Panc1 (cell line): ENCODE measurements at regions of chr10 and their contacts with region 1.

Region 1: DNA sequence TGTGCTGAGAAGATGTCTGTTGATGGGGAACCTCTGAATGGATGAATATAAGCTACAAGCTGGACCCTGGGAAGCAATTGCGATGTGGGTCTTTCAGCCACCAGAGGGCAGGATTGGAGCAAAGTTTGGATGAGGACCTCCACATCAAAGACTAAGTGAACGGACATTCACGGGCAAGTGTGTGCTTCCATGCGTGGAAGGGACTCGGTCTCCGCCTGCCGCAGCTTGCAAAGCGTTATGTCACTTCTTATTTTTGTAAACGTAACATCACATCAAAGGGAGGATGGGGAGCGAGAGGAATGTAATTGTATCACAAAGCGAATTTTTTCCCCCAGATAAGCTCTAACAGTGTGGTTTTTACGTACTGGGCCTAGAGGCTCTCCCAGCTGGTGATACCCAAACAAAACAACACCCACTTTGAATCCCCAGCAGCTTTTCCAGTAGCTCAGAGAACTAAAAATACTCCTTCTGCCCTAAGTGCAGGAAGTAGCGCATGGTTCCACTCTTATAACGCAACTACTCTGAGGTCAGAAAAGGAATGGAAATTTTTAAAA is 65.0 kb downstream of the VWA2 start:
- DNase-seq: peak; percentile 76
- ATAC-seq: peak; percentile 42
- H3K4me3 ChIP-seq: peak overlapping the region; percentile 4 to 11; a peak in 2 of 4 replicates
- H3K27ac ChIP-seq: peak overlapping the region; percentile 74
- H3K4me1 ChIP-seq: peaks cover 40% of the 10 kb centered on the region
- H3K27me3 ChIP-seq: no peaks in the 10 kb centered on the region
- CTCF ChIP-seq: peak; percentile 80

Region 2: DNA sequence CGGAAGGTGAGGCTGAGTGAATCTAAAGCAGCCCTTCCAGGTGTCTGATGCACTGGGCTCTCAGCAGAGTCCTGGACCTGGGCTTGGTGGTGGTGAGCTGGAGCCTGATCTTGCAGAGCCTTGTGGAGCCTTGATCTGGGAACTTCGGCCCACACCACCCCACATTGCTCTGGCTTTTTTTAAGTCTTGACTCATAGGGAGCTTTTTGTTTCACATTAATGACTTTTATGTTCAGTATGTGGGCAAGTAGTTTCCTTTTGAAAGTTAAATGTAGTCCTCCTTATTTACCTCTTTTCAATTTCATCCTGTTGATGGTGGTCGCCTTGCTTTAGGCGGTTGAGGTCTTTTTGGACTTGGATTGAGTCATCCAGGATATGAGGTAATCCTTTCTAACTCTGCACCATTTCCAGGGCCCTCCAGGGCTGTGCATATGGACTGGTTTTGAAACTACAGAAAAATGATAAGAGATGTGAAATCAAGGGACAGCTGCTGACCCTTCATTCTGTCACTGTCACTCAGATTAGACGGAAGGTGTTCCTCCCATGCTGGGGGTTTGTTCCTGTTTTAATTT is 637.3 kb before region 1 on chr10:
- CTCF ChIA-PET with region 1: no interaction called
- POLR2A ChIA-PET with region 1: no interaction called
- in situ Hi-C with region 1: no loop called
- intact Hi-C with region 1: no loop called
- DNase-seq: no peak
- ATAC-seq: no peak
- H3K4me3 ChIP-seq: no peak overlapping the region
- H3K27ac ChIP-seq: no peak overlapping the region
- H3K4me1 ChIP-seq: no peaks in the 10 kb centered on the region
- H3K27me3 ChIP-seq: peaks cover 8% of the 10 kb centered on the region
- CTCF ChIP-seq: no peak

Region 3: DNA sequence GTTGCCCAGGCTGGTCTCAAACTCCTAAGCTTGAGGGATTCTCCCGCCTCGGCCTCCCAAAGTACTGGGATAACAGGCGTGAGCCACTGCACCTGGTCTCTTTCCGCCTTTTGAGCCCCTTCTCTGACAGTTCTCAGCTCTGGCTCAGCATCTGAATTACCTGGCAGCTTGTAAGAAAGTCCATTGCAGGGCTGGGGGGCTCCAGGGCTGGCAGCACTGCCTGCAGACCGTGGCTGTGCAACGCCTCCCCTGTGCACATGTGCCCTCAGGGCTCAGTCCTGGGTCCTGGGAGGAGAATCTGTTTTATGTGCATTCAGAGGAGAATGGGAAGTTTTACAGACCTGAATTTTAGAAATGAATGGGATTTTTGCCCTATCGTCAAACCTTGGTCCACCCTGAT is 27.4 kb before region 1 on chr10:
- CTCF ChIA-PET with region 1: no interaction called
- POLR2A ChIA-PET with region 1: no interaction called
- in situ Hi-C with region 1: no loop called
- intact Hi-C with region 1: no loop called
- DNase-seq: no peak
- ATAC-seq: no peak
- H3K4me3 ChIP-seq: no peak overlapping the region
- H3K27ac ChIP-seq: no peak overlapping the region
- H3K4me1 ChIP-seq: peaks cover 8% of the 10 kb centered on the region
- H3K27me3 ChIP-seq: no peaks in the 10 kb centered on the region
- CTCF ChIP-seq: no peak

Region 4: GRCh38 chr10:114403541-114404161 is 99.6 kb after region 1 on chr10:
- CTCF ChIA-PET with region 1: interaction called, 9 read pairs
- POLR2A ChIA-PET with region 1: interaction called, 3 read pairs
- in situ Hi-C with region 1: no loop called
- intact Hi-C with region 1: loop called (anchors 5 kb)
- DNase-seq: no peak
- ATAC-seq: peak; percentile 66
- H3K4me3 ChIP-seq: peak overlapping the region; percentile 77 to 92
- H3K27ac ChIP-seq: peak overlapping the region; percentile 95
- H3K4me1 ChIP-seq: peaks cover 62% of the 10 kb centered on the region
- H3K27me3 ChIP-seq: no peaks in the 10 kb centered on the region
- CTCF ChIP-seq: peak; percentile 82

Region 5: DNA sequence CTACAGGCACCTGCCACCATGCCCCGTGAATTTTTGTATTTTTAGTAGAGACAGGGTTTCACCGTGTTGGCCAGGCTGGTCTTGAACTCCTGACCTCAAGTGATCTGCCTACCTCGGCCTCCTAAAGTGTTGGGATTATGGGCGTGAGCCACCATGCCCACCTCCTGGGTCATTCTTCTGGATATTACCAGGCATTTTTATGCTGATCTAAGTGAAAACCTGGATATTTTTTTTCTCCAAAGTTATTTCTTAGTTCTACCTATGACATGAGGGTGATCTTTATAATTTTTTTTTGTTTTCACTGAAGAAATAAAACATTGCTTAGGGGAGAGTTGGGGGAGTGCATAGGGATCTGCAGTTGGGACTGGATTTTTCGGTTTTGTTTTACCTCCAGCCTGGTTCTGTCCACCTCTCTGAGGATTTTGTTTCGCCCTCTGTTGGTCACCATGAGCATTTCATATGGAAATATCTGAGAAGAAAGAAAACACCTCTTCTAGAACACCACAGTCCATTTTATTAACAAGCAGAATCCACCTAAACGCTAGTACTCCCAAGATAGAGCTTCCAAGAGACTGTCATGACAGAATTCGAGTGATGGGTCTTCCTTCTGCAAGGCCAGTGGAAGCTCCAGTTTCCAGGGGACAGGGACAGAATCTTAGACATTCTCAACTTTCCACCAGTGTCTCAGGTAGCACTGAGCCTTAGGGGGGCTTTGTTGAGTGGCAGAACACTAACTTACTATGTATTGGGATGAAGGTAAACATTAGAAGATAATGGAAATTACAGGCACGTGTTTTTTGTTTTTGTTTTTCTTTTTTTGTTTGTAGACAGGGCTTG is 133.6 kb after region 1 on chr10:
- CTCF ChIA-PET with region 1: interaction called, 3 read pairs
- POLR2A ChIA-PET with region 1: no interaction called
- in situ Hi-C with region 1: no loop called
- intact Hi-C with region 1: loop called (anchors 1 kb)
- DNase-seq: peak; percentile 15
- ATAC-seq: peak; percentile 74; the same call in 1 of the 2 replicates
- H3K4me3 ChIP-seq: no peak overlapping the region
- H3K27ac ChIP-seq: peak overlapping the region; percentile 12; the same call in 1 of the 2 replicates
- H3K4me1 ChIP-seq: no peaks in the 10 kb centered on the region
- H3K27me3 ChIP-seq: no peaks in the 10 kb centered on the region
- CTCF ChIP-seq: peak; percentile 80